ENCODE measurements at regions of chr12 and their contacts with region 1.

Region 1: DNA sequence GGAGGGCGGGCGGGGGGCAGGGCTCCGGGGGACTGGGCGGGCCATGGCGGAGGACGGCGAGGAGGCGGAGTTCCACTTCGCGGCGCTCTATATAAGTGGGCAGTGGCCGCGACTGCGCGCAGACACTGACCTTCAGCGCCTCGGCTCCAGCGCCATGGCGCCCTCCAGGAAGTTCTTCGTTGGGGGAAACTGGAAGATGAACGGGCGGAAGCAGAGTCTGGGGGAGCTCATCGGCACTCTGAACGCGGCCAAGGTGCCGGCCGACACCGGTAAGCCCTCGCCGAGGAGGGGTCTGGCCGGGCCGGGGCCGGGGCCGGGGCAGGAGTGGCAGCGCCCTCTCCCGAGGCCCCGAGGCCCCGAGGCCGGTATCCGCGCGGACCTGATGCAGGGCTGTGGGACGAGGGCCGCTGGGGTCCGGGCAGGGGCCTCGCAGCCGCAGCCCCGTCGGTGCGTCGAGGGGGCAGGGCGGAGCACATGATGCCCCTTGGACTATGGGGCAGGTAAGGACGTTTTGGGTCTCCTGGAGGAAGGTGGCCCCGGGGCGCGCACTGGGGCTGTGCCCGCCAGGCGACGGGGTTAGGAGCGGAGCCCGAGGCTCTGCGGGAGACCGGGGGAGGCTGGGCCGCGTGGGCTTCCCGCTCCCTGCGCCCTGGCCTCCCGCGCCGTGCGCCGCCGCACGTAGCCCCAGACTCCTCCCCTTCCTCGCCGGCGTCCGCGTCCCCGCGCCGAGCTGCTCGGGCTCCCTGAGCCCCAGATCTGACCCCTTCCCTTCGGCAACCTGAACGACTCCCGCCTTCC is at the start of gene TPI1:
- DNase-seq: peak; percentile 89 to 93 (median 90)
- ATAC-seq: peak; percentile 66 to 87 (median 82)
- H3K4me3 ChIP-seq: peak within 1 kb of the TSS; percentile 77 to 100 (median 98)
- H3K27ac ChIP-seq: peak within 1 kb of the TSS; percentile 96 to 100 (median 99)
- H3K4me1 ChIP-seq: peaks cover 15 to 47% (median 43%) of the 10 kb centered on the region in 12 donors
- H3K27me3 ChIP-seq: no peaks in the 10 kb centered on the region
- CTCF ChIP-seq: peak in 2 of 12 donors; percentile 15 to 23
- POLR2A ChIP-seq: peak; percentile 80 to 99
- total RNA-seq, gene TPI1: 600 to 1,024 (median 730) TPM

Region 2: GRCh38 chr12:6851921-6852650 is 15.5 kb before region 1 on chr12 and contains the start of gene USP5:
- intact Hi-C with region 1: loop called in 1 of 10 experiments (anchors 1 kb)
- DNase-seq: peak; percentile 99 to 100 (median 100)
- ATAC-seq: peak; percentile 90 to 94 (median 92)
- H3K4me3 ChIP-seq: peak within 1 kb of the TSS; percentile 50 to 83 (median 72)
- H3K27ac ChIP-seq: peak within 1 kb of the TSS; percentile 64 to 99 (median 94)
- H3K4me1 ChIP-seq: peaks cover 0 to 22% (median 14%) of the 10 kb centered on the region in 12 donors
- H3K27me3 ChIP-seq: no peaks in the 10 kb centered on the region
- CTCF ChIP-seq: peak in 3 of 12 donors; percentile 10 to 32 (median 27)
- POLR2A ChIP-seq: peak in 1 of 2 donors; percentile 45
- total RNA-seq, gene USP5: 42.0 to 96.8 (median 61.6) TPM